Dendritic cell treated with granulocyte-macrophage colony-stimulating factor and Interleukin-4, amounts not matched to agents 40 ng/mL and 50 ng/mL, for 4 days (primary cell): ENCODE measurements at regions of chr5 and their contacts with region 1.

Region 1: DNA sequence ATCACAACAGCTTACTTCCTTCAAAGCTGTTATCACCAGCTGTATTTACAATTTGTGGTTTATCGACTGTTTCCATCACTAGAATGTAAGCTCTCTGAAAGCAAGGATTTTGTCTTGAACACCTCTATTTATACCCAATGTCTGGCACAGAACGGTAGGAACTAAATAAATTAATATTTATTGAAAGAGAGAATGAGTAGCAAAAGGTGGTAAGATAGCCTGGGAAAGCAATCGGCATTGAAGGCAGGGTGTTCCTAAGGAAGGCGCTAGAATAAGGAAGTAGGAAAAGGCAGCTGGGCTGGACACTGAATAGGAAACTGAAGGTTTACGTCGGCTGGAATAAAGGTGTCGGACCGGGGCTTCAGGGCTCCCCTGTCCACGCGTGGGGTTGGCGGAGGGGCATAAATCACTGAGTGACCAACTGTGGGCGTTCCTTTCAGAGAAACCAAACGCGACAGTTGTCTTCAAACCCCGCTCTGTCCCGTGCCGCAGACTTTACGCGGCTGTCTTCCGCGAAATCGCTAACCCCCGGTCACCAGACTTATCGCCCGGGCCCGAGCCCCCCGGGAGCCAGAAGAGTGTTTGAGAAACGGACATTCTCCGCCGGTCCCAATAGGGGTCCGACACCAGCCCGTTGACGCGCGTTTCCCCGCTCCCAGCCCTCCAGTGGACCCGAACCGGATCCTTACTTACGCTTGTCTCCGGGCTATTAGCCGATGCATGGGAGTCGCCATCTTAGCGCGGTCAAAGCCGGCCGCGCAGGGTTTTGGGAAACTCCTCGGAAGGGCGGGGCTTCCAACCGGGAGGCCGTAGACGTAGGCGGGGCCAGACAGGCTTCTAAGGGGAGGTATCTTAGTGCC is at the start of gene ZCCHC10:
- H3K4me3 Mint-ChIP-seq: peak within 1 kb of the TSS; percentile 85
- H3K27ac Mint-ChIP-seq: peak within 1 kb of the TSS; percentile 98
- H3K4me1 Mint-ChIP-seq: peaks cover 17% of the 10 kb centered on the region
- H3K27me3 Mint-ChIP-seq: peaks cover 4% of the 10 kb centered on the region

Region 2: GRCh38 chr5:132915681-132916080 is 110.4 kb before region 1 on chr5:
- intact Hi-C with region 1: no loop called
- H3K4me3 Mint-ChIP-seq: no peak overlapping the region
- H3K27ac Mint-ChIP-seq: no peak overlapping the region
- H3K4me1 Mint-ChIP-seq: peaks cover 13% of the 10 kb centered on the region
- H3K27me3 Mint-ChIP-seq: no peaks in the 10 kb centered on the region

Region 3: GRCh38 chr5:132963175-132964104 is 62.6 kb before region 1 on chr5 and contains the start of gene AFF4:
- intact Hi-C with region 1: loop called (anchors 2 kb)
- H3K4me3 Mint-ChIP-seq: peak within 1 kb of the TSS; percentile 86
- H3K27ac Mint-ChIP-seq: peak within 1 kb of the TSS; percentile 93
- H3K4me1 Mint-ChIP-seq: peaks cover 2% of the 10 kb centered on the region
- H3K27me3 Mint-ChIP-seq: no peaks in the 10 kb centered on the region

Region 4: DNA sequence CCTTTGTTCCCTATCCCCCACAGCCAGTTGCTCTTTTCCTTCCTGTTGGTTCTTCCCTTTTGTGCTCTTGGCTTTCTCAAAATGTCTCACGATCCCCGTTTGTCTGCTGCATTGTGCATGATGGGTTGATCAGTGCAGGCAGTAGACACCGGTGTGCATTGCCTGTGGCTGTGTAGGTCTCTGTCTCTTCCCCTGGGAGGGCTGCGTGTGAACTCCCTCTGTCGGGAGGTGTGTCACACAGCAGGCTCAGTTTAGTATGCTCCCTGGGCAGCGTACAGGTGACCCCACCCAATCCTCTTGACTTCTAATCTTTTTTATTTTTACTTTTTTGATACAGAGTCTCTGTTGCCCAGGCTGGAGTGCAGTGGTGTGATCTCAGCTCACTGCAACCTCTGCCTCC is 321.0 kb after region 1 on chr5:
- intact Hi-C with region 1: no loop called
- H3K4me3 Mint-ChIP-seq: no peak overlapping the region
- H3K27ac Mint-ChIP-seq: no peak overlapping the region
- H3K4me1 Mint-ChIP-seq: no peaks in the 10 kb centered on the region
- H3K27me3 Mint-ChIP-seq: no peaks in the 10 kb centered on the region